H1 (cell line): ENCODE measurements at regions of chr1 and their contacts with region 1.

Region 1: DNA sequence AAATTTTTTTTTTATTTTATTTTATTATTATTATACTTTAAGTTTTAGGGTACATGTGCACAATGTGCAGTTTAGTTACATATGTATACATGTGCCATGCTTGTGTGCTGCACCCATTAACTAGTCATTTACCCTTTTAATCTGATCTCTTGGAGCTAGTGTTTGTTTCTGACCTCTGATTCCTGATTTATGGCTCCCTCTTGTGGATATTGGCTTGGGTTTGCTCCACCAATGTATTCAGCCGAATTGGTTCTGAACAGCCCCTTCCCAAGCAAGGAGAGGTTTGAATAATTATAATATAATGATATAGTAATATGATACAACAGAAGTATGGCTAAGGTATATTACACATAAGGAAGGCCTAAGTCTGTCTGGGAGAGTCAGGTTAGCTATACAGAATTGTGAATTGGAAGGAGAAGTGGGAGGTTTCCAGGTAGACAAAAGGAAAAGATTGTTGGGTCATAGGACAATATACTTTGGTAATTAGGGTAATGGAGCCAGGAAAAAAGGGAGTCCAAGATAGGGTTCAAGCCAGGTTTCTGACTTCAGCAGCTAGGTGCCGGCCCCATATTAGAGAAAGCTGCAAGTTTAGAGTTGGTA is 53.1 kb upstream of the HMCN1 start:
- DNase-seq: no peak
- H3K4me3 ChIP-seq: no peak overlapping the region
- H3K27ac ChIP-seq: no peak overlapping the region
- H3K4me1 ChIP-seq: no peaks in the 10 kb centered on the region; a peak in 2 of 7 replicates
- H3K27me3 ChIP-seq: no peaks in the 10 kb centered on the region
- CTCF ChIP-seq: peak in 2 of 3 experiments; percentile 65; a peak in 3 of 4 replicates
- EP300 ChIP-seq: no peak
- POLR2A ChIP-seq: no peak
- RAD21 ChIP-seq: peak; percentile 82 to 83

Region 2: DNA sequence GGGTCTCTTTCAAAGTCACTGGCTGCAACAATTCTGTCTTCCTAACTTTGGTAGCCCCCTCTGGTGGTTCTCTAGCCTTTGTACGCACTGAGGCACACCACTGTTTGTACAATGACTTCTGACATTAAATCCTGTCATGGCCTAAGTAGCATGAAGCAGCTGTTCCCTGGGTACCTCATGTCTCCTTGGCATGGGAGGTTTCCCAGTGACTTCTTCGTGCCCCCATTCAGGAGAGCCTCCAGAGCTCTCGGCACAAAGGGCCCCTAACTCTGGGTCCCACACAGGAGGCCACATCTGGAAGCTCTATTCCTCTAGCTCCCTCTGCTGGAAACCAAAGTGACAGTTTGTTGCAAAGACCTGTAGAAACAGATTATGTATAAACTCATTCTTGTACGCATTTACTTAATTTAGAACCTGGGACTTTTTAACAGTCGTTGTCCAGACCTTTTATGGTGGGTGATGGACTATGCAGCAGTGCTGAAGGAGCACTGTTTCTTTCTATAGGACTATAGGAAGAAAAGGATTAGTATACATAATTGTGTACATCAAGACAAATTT is 510.8 kb before region 1 on chr1:
- CTCF ChIA-PET with region 1: interaction called, 12 read pairs
- POLR2A ChIA-PET with region 1: no interaction called
- DNase-seq: peak; percentile 33 to 65
- H3K4me3 ChIP-seq: no peak overlapping the region
- H3K27ac ChIP-seq: no peak overlapping the region
- H3K4me1 ChIP-seq: peaks cover 0 to 5% (median 0%) of the 10 kb centered on the region in 4 experiments; a peak in 2 of 7 replicates
- H3K27me3 ChIP-seq: no peaks in the 10 kb centered on the region
- CTCF ChIP-seq: peak; percentile 35 to 63 (median 61)
- EP300 ChIP-seq: no peak
- POLR2A ChIP-seq: no peak
- RAD21 ChIP-seq: peak; percentile 58 to 73

Region 3: GRCh38 chr1:185559684-185560331 is 121.3 kb before region 1 on chr1:
- CTCF ChIA-PET with region 1: interaction called, 16 read pairs
- POLR2A ChIA-PET with region 1: no interaction called
- DNase-seq: peak; percentile 51 to 54
- H3K4me3 ChIP-seq: no peak overlapping the region
- H3K27ac ChIP-seq: no peak overlapping the region
- H3K4me1 ChIP-seq: no peaks in the 10 kb centered on the region; a peak in 2 of 7 replicates
- H3K27me3 ChIP-seq: no peaks in the 10 kb centered on the region
- CTCF ChIP-seq: peak; percentile 66 to 86 (median 67)
- EP300 ChIP-seq: no peak
- POLR2A ChIP-seq: no peak
- RAD21 ChIP-seq: peak; percentile 81 to 86

Region 4: DNA sequence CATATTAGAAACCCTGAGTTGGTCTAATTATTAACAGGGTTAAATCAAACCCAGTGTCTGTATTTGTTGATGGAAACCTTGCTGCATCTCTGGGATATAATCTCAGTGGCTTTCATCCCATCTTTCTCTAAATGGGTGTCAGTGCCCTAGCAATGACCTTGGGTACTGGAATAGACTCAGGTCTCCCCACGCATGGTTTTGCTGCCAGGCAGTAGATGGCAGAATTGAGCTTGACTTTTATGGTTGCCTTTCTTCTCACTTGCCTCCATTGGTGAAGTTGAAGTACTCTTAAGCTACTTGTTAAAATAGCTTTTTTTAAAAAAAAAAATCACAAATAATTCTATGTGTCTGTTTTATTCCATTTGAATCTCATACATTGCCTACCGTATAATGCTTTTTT is 28.8 kb before region 1 on chr1:
- CTCF ChIA-PET with region 1: interaction called, 20 read pairs
- POLR2A ChIA-PET with region 1: no interaction called
- DNase-seq: no peak
- H3K4me3 ChIP-seq: no peak overlapping the region
- H3K27ac ChIP-seq: no peak overlapping the region
- H3K4me1 ChIP-seq: 0 out of 7 replicates have a peak, but pooled peaks cover 0 to 2% (median 0%) of the 10 kb centered on the region in 4 experiments
- H3K27me3 ChIP-seq: no peaks in the 10 kb centered on the region
- CTCF ChIP-seq: peak; percentile 22 to 50 (median 42)
- EP300 ChIP-seq: no peak
- POLR2A ChIP-seq: no peak
- RAD21 ChIP-seq: peak; percentile 46 to 64

Region 5: GRCh38 chr1:185670187-185670627 is 10.9 kb before region 1 on chr1:
- CTCF ChIA-PET with region 1: interaction called, 66 read pairs
- POLR2A ChIA-PET with region 1: no interaction called
- DNase-seq: peak in 1 of 2 experiments; percentile 62
- H3K4me3 ChIP-seq: no peak overlapping the region
- H3K27ac ChIP-seq: no peak overlapping the region
- H3K4me1 ChIP-seq: peaks cover 0 to 2% (median 0%) of the 10 kb centered on the region in 4 experiments; a peak in 2 of 7 replicates
- H3K27me3 ChIP-seq: no peaks in the 10 kb centered on the region
- CTCF ChIP-seq: peak in 2 of 3 experiments; percentile 57; a peak in 3 of 4 replicates
- EP300 ChIP-seq: no peak
- POLR2A ChIP-seq: no peak
- RAD21 ChIP-seq: peak; percentile 77 to 82

Region 6: DNA sequence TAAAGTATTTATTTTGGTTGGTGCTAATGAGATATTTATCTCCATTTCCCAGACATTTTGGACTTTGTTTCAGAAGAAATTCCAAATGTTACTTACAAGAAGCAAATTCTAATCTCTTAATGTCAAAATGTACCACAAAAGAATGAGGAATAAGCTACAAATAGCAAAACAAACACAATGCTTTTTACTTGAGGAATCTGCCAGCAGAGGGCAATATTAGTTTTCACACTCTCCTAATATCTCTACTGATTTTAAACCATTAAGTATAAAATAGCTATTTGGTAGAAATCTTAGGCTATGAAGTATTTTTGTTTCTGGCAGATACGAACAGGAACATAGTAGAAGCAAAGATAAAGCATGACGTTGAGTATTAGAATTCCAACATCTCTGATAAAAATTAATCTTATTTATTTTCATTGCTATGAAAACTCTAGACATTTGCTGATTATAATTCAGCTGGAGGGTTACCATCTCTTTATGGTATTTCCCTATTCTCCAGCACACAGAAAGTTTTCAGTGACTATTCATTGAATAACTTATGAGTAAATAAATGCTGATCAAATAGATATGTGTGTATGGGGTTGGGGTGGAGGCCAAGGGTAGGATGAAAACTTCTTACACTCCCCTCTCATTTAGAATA is 39.6 kb after region 1 on chr1:
- CTCF ChIA-PET with region 1: interaction called, 22 read pairs
- POLR2A ChIA-PET with region 1: no interaction called
- DNase-seq: no peak
- H3K4me3 ChIP-seq: no peak overlapping the region
- H3K27ac ChIP-seq: no peak overlapping the region
- H3K4me1 ChIP-seq: no peaks in the 10 kb centered on the region
- H3K27me3 ChIP-seq: no peaks in the 10 kb centered on the region
- CTCF ChIP-seq: peak in 2 of 3 experiments; percentile 13 to 42; a peak in 2 of 4 replicates
- EP300 ChIP-seq: no peak
- POLR2A ChIP-seq: no peak
- RAD21 ChIP-seq: peak in 1 of 2 experiments; percentile 55; a peak in 3 of 4 replicates